ENCODE measurements at regions of chr1 and their contacts with region 1.

Region 1: GRCh38 chr1:65687428-65688214 is 105.1 kb upstream of the PDE4B start:
- DNase-seq: peak; percentile 82 to 92 (median 86)
- ATAC-seq: peak; percentile 95
- H3K4me3 ChIP-seq: no peak overlapping the region
- H3K27ac ChIP-seq: no peak overlapping the region
- H3K4me1 ChIP-seq: peaks cover 0 to 11% of the 10 kb centered on the region in 2 experiments; a peak in 2 of 5 replicates
- H3K27me3 ChIP-seq: no peaks in the 10 kb centered on the region
- CTCF ChIP-seq: peak; percentile 90 to 95 (median 92)
- EP300 ChIP-seq: peak; percentile 64
- POLR2A ChIP-seq: no peak
- RAD21 ChIP-seq: peak; percentile 99

Region 2: GRCh38 chr1:64823691-64824476 is 863.7 kb before region 1 on chr1:
- CTCF ChIA-PET with region 1: no interaction called
- POLR2A ChIA-PET with region 1: no interaction called
- in situ Hi-C with region 1: no loop called
- intact Hi-C with region 1: loop called (anchors 5 kb)
- DNase-seq: peak; percentile 47 to 83 (median 52)
- ATAC-seq: peak; percentile 91
- H3K4me3 ChIP-seq: no peak overlapping the region
- H3K27ac ChIP-seq: no peak overlapping the region
- H3K4me1 ChIP-seq: no peaks in the 10 kb centered on the region
- H3K27me3 ChIP-seq: no peaks in the 10 kb centered on the region
- CTCF ChIP-seq: peak; percentile 72 to 95 (median 82)
- EP300 ChIP-seq: no peak
- POLR2A ChIP-seq: no peak
- RAD21 ChIP-seq: peak; percentile 93 to 97

Region 3: GRCh38 chr1:65067491-65068201 is 620.0 kb before region 1 on chr1:
- CTCF ChIA-PET with region 1: interaction called, 8 read pairs
- POLR2A ChIA-PET with region 1: interaction called, 3 read pairs
- in situ Hi-C with region 1: loop called (anchors 5 kb)
- intact Hi-C with region 1: no loop called
- DNase-seq: peak; percentile 66 to 76 (median 76)
- ATAC-seq: peak; percentile 39
- H3K4me3 ChIP-seq: peak overlapping the region; percentile 80
- H3K27ac ChIP-seq: peak overlapping the region; percentile 94
- H3K4me1 ChIP-seq: peaks cover 18 to 27% of the 10 kb centered on the region in 2 experiments; a peak in 4 of 5 replicates
- H3K27me3 ChIP-seq: no peaks in the 10 kb centered on the region
- CTCF ChIP-seq: no peak
- EP300 ChIP-seq: no peak
- POLR2A ChIP-seq: peak; percentile 87
- RAD21 ChIP-seq: no peak

Region 4: GRCh38 chr1:65214340-65215027 is 473.1 kb before region 1 on chr1:
- CTCF ChIA-PET with region 1: interaction called, 9 read pairs
- POLR2A ChIA-PET with region 1: no interaction called
- in situ Hi-C with region 1: loop called (anchors 5 kb)
- intact Hi-C with region 1: loop called (anchors 1 kb)
- DNase-seq: no peak
- ATAC-seq: no peak; the same call in 1 of the 3 replicates
- H3K4me3 ChIP-seq: no peak overlapping the region
- H3K27ac ChIP-seq: no peak overlapping the region
- H3K4me1 ChIP-seq: peaks cover 5 to 19% of the 10 kb centered on the region in 2 experiments; a peak in 3 of 5 replicates
- H3K27me3 ChIP-seq: no peaks in the 10 kb centered on the region
- CTCF ChIP-seq: no peak
- EP300 ChIP-seq: no peak
- POLR2A ChIP-seq: no peak
- RAD21 ChIP-seq: no peak

Region 5: DNA sequence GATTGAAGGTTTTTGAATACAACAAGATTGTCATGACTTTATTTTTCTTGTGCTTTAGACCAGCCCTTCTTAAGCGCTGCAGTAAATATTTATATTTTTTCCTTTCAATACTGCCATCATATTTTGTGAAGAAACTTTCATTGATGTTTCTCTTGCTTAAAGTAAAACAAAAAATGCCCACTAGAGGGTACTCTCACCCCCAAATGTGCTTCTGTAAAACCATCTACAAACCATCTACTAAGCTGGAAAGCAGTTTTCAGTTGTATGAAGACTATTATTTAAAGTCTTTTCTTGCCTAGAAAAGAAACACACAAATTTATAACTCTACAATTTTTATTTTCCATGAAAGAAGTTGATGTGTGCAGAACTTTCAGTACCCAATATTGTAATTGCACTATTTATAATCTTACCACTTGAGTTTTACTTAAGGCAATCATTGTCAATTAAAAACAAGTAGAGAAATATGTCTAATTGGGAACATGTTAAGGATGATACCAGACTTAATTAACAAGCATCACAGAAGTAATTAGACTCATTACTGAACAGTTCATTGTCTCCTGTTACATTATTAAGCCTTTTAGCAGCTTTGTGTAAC is 256.4 kb before region 1 on chr1:
- CTCF ChIA-PET with region 1: interaction called, 6 read pairs
- POLR2A ChIA-PET with region 1: interaction called, 7 read pairs
- in situ Hi-C with region 1: loop called (anchors 10 kb)
- intact Hi-C with region 1: loop called (anchors 1 kb)
- DNase-seq: peak; percentile 31 to 65 (median 40)
- ATAC-seq: peak; percentile 63
- H3K4me3 ChIP-seq: no peak overlapping the region
- H3K27ac ChIP-seq: no peak overlapping the region
- H3K4me1 ChIP-seq: peaks cover 0 to 6% of the 10 kb centered on the region in 2 experiments; a peak in 3 of 5 replicates
- H3K27me3 ChIP-seq: no peaks in the 10 kb centered on the region
- CTCF ChIP-seq: peak; percentile 43 to 70 (median 50); a peak in 4 of 6 replicates
- EP300 ChIP-seq: no peak
- POLR2A ChIP-seq: no peak
- RAD21 ChIP-seq: peak; percentile 74 to 84